Activated CD8-positive, alpha-beta T cell treated with anti-CD3 and anti-CD28 coated beads for 36 hours (primary cell): ENCODE measurements at regions of chr12 and their contacts with region 1.

Region 1: DNA sequence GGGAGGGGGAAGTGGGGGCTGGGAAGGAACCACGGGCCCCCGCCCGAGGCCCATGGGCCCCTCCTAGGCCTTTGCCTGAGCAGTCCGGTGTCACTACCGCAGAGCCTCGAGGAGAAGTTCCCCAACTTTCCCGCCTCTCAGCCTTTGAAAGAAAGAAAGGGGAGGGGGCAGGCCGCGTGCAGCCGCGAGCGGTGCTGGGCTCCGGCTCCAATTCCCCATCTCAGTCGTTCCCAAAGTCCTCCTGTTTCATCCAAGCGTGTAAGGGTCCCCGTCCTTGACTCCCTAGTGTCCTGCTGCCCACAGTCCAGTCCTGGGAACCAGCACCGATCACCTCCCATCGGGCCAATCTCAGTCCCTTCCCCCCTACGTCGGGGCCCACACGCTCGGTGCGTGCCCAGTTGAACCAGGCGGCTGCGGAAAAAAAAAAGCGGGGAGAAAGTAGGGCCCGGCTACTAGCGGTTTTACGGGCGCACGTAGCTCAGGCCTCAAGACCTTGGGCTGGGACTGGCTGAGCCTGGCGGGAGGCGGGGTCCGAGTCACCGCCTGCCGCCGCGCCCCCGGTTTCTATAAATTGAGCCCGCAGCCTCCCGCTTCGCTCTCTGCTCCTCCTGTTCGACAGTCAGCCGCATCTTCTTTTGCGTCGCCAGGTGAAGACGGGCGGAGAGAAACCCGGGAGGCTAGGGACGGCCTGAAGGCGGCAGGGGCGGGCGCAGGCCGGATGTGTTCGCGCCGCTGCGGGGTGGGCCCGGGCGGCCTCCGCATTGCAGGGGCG is at the start of gene GAPDH:
- DNase-seq: peak; percentile 94
- ATAC-seq: peak; percentile 55
- H3K4me3 Mint-ChIP-seq: peak within 1 kb of the TSS; percentile 93
- H3K27ac Mint-ChIP-seq: peak within 1 kb of the TSS; percentile 99
- H3K4me1 Mint-ChIP-seq: peaks cover 37% of the 10 kb centered on the region
- H3K27me3 Mint-ChIP-seq: no peaks in the 10 kb centered on the region
- CTCF ChIP-seq: no peak
- total RNA-seq, gene GAPDH: 9,109 to 9,234 TPM

Region 2: GRCh38 chr12:6312529-6313325 is 221.4 kb before region 1 on chr12:
- CTCF ChIA-PET with region 1: no interaction called
- POLR2A ChIA-PET with region 1: no interaction called
- intact Hi-C with region 1: no loop called
- DNase-seq: peak; percentile 49
- ATAC-seq: peak; percentile 78
- H3K4me3 Mint-ChIP-seq: no peak overlapping the region
- H3K27ac Mint-ChIP-seq: no peak overlapping the region
- H3K4me1 Mint-ChIP-seq: peaks cover 13% of the 10 kb centered on the region
- H3K27me3 Mint-ChIP-seq: peaks cover 8% of the 10 kb centered on the region
- CTCF ChIP-seq: no peak

Region 3: GRCh38 chr12:6443361-6443983 is 90.6 kb before region 1 on chr12:
- CTCF ChIA-PET with region 1: interaction called, 3 read pairs
- POLR2A ChIA-PET with region 1: interaction called, 43 read pairs
- intact Hi-C with region 1: no loop called
- DNase-seq: peak; percentile 84
- ATAC-seq: peak; percentile 68
- H3K4me3 Mint-ChIP-seq: peak overlapping the region; percentile 93
- H3K27ac Mint-ChIP-seq: peak overlapping the region; percentile 99
- H3K4me1 Mint-ChIP-seq: peaks cover 61% of the 10 kb centered on the region
- H3K27me3 Mint-ChIP-seq: no peaks in the 10 kb centered on the region
- CTCF ChIP-seq: no peak

Region 4: DNA sequence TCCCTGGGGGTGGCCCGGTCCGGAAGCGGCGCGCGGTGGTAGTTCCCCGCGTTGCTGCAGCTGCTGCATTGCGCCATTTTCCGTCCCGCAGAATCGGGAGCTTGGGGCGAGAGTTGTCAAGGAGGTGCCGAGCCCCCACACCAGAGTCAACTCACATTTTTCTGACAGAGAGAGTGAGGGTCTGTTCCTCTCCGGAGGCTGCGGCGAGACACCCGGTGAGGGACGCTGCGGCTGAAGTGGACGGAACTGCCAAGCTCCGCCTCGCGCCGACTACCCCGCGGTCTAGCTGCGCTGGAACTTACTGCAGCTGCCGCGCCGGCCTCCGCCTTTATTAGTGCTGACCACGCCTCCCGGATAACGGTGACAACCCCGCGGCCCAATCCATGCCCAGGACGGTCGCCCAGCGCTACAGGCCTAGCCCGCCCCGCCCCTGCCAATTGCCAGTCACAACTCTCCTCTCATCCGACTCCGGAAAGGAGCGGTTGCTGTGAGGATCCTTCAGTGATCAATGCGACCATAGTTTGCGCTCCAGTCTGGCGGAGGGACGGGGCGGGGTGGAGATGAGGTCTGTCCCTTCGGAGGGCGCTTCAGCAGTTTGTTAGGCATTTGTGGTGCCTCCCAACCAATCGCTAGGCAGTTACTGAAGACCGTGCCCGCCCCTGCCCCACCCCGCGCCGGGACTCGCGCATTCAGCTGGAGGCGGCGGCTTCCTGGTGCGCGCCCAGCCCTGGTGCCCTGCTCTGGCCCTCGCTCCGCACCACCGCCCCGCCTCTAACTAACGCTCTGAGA is 63.5 kb before region 1 on chr12 and contains the start of gene VAMP1:
- CTCF ChIA-PET with region 1: interaction called, 19 read pairs
- POLR2A ChIA-PET with region 1: interaction called, 20 read pairs
- intact Hi-C with region 1: no loop called
- DNase-seq: peak; percentile 99
- ATAC-seq: peak; percentile 90
- H3K4me3 Mint-ChIP-seq: peak within 1 kb of the TSS; percentile 89
- H3K27ac Mint-ChIP-seq: peak within 1 kb of the TSS; percentile 88
- H3K4me1 Mint-ChIP-seq: peaks cover 44% of the 10 kb centered on the region
- H3K27me3 Mint-ChIP-seq: no peaks in the 10 kb centered on the region
- CTCF ChIP-seq: no peak
- total RNA-seq, gene VAMP1: 50.0 to 51.2 TPM

Region 5: DNA sequence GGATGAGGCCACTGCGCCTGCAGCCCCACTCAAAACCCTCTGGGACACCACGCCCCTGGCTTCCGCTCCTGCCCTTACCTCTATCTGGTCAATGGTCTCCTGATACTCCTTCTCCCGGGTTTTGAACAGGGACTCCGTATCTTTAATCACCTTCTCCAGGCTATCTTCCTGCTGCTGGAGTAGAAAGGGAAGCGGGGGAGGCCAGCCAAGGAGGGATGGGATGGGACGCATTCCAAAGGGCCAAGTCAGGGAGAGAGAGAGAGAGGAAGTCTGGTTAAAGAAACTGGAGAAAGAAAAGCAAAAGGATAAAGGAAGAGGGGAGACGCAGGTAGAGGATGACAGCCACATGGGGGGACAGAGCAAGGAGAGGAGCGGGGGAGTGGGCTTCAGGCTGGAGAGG is 13.9 kb after region 1 on chr12:
- CTCF ChIA-PET with region 1: interaction called, 68 read pairs
- POLR2A ChIA-PET with region 1: interaction called, 264 read pairs
- intact Hi-C with region 1: no loop called
- DNase-seq: no peak
- ATAC-seq: no peak
- H3K4me3 Mint-ChIP-seq: no peak overlapping the region
- H3K27ac Mint-ChIP-seq: no peak overlapping the region
- H3K4me1 Mint-ChIP-seq: peaks cover 19% of the 10 kb centered on the region
- H3K27me3 Mint-ChIP-seq: no peaks in the 10 kb centered on the region
- CTCF ChIP-seq: no peak

Region 6: GRCh38 chr12:6607751-6608591 is 73.9 kb after region 1 on chr12:
- CTCF ChIA-PET with region 1: interaction called, 4 read pairs
- POLR2A ChIA-PET with region 1: interaction called, 30 read pairs
- intact Hi-C with region 1: no loop called
- DNase-seq: peak; percentile 89
- ATAC-seq: peak; percentile 67
- H3K4me3 Mint-ChIP-seq: no peak overlapping the region
- H3K27ac Mint-ChIP-seq: no peak overlapping the region
- H3K4me1 Mint-ChIP-seq: peaks cover 54% of the 10 kb centered on the region
- H3K27me3 Mint-ChIP-seq: no peaks in the 10 kb centered on the region
- CTCF ChIP-seq: no peak